ENCODE measurements at regions of chr2 and their contacts with region 1.

Region 1: GRCh38 chr2:84022810-84023431 is 436.2 kb downstream of the SUCLG1 start:
- DNase-seq: peak in 1 of 2 donors; percentile 18
- ATAC-seq: no peak
- H3K4me3 ChIP-seq: no peak overlapping the region
- H3K27ac ChIP-seq: no peak overlapping the region
- H3K4me1 ChIP-seq: no peaks in the 10 kb centered on the region
- H3K27me3 ChIP-seq: no peaks in the 10 kb centered on the region
- CTCF ChIP-seq: peak in 8 of 9 donors; percentile 19 to 72 (median 64)

Region 2: DNA sequence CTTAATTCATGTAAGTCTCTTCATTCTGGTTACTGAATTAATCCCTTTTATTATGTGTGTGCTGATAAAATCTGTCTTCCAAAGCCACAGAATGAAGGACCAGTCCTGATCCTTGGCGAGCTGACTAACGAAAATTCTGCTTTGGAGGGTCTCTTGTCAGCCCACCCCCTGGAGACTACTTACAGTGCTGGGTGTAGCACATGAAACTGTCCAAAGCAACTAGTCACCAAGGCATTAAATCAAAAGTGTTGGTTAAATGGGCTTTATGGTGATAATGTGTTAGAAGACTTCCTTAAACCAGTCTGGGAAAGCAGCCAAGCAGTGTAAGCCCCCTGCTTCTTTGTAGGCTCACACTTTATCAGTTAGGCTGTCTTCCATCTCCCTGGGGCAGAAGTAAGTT is 15.9 kb after region 1 on chr2:
- intact Hi-C with region 1: loop called in 1 of 10 experiments (anchors 2 kb)
- DNase-seq: no peak
- ATAC-seq: no peak
- H3K4me3 ChIP-seq: no peak overlapping the region
- H3K27ac ChIP-seq: no peak overlapping the region
- H3K4me1 ChIP-seq: no peaks in the 10 kb centered on the region
- H3K27me3 ChIP-seq: peaks cover 0 to 7% (median 0%) of the 10 kb centered on the region in 7 donors
- CTCF ChIP-seq: no peak

Region 3: DNA sequence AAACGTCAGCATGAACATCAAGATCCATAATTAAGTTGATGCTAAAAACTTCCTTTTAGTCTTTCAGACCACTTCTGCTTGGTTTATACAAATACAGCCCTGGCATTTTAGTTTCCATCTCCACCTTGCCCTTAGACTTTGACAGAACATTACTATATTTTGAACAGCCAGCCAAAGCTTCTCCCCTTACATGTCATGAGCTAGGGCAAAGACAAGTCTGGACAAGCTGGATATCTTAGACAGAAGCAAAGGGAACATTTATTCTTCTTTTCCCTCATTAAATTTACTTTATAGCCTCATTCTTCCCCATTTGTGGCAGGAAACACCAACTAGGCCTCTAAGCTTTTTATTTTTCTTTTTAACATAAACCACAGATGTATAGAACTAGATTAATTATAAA is 32.9 kb after region 1 on chr2:
- intact Hi-C with region 1: no loop called
- DNase-seq: no peak
- ATAC-seq: no peak
- H3K4me3 ChIP-seq: no peak overlapping the region
- H3K27ac ChIP-seq: no peak overlapping the region
- H3K4me1 ChIP-seq: no peaks in the 10 kb centered on the region
- H3K27me3 ChIP-seq: no peaks in the 10 kb centered on the region
- CTCF ChIP-seq: no peak

Region 4: GRCh38 chr2:84302513-84303412 is 279.8 kb after region 1 on chr2:
- intact Hi-C with region 1: loop called in 8 of 10 experiments (anchors 1 to 5 kb)
- DNase-seq: peak in 1 of 2 donors; percentile 10
- ATAC-seq: peak in 1 of 8 donors; percentile 44
- H3K4me3 ChIP-seq: no peak overlapping the region
- H3K27ac ChIP-seq: no peak overlapping the region
- H3K4me1 ChIP-seq: no peaks in the 10 kb centered on the region
- H3K27me3 ChIP-seq: peaks cover 0 to 6% (median 0%) of the 10 kb centered on the region in 7 donors
- CTCF ChIP-seq: peak in 8 of 9 donors; percentile 44 to 79 (median 69)

Region 5: GRCh38 chr2:84314901-84315330 is 292.0 kb after region 1 on chr2:
- intact Hi-C with region 1: loop called in 3 of 10 experiments (anchors 5 to 10 kb)
- DNase-seq: peak; percentile 71 to 73
- ATAC-seq: peak; percentile 71 to 95 (median 82)
- H3K4me3 ChIP-seq: no peak overlapping the region
- H3K27ac ChIP-seq: no peak overlapping the region
- H3K4me1 ChIP-seq: no peaks in the 10 kb centered on the region
- H3K27me3 ChIP-seq: peaks cover 0 to 31% (median 19%) of the 10 kb centered on the region in 7 donors
- CTCF ChIP-seq: peak; percentile 58 to 88 (median 82)